ENCODE measurements at regions of chr15 and their contacts with region 1.

Region 1: DNA sequence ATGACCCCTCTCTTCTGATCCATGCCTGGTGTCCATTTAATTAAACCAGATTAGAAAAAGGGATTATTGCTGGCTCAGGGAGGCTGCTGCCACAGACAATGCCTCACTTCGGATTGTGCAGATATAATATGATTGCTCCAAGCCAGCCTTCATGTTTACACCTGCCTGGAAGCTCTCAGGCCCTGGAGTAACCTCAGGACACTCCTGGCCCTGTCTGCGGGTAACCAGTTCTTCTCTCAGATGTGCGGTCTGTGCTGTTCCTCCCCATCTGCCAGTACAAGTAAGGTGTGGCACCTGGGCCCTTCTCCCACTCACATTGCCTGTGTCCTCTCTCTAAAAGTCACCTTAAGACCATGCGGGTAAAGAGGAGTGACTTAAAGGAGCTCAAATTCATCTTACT is 8.8 kb upstream of the GOLGA8J start:
- DNase-seq: no peak
- ATAC-seq: no peak
- H3K4me3 ChIP-seq: no peak overlapping the region
- H3K27ac ChIP-seq: no peak overlapping the region
- H3K4me1 ChIP-seq: 0 out of 3 replicates have a peak, but pooled peaks cover 3% of the 10 kb centered on the region
- CTCF ChIP-seq: no peak
- EP300 ChIP-seq: no peak
- POLR2A ChIP-seq: no peak
- RAD21 ChIP-seq: no peak

Region 2: GRCh38 chr15:29656636-29657475 is 417.1 kb before region 1 on chr15:
- CTCF ChIA-PET with region 1: interaction called, 11 read pairs
- POLR2A ChIA-PET with region 1: no interaction called
- DNase-seq: peak; percentile 52 to 87
- ATAC-seq: peak; percentile 97 to 99
- H3K4me3 ChIP-seq: peak overlapping the region; percentile 50
- H3K27ac ChIP-seq: peak overlapping the region; percentile 67 to 81
- H3K4me1 ChIP-seq: no peaks in the 10 kb centered on the region
- CTCF ChIP-seq: peak; percentile 48
- EP300 ChIP-seq: no peak
- POLR2A ChIP-seq: peak; percentile 17; the same call in 1 of the 2 replicates
- RAD21 ChIP-seq: peak; percentile 13 to 42; a peak in 1 of 5 replicates

Region 3: DNA sequence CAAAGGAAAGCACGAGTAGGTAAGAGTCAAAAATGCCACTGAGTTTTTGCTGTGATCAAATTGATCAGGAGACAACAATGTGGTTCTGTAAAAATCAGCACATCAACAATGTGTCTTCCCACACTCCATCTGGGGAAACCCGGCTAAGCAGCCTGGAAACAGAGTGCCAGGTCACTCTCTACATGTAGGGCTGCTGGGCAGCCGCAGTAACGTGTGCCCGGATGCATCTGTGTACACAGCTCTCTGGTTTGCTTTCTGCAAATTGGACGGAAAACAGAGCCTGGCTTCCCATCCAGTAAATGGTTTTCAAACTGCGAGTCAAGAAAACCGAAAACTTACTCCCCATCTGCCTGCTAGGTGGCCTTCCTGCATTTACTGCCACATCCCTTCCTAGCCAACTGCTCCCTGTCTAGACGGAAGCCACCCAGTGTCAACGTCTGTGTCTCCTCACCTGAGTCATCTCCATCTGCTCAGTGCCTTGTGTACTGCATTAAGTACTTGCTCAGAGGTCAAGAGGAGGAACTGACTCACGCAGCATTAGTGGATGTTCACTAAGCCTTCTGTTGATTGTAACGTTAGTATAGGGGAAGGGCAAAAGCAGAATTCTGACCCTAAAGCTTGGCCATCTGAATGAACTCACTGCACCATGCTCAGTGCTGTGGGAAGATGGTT is 375.7 kb before region 1 on chr15:
- CTCF ChIA-PET with region 1: interaction called, 11 read pairs
- POLR2A ChIA-PET with region 1: no interaction called
- DNase-seq: peak; percentile 86 to 96
- ATAC-seq: peak; percentile 92 to 95
- H3K4me3 ChIP-seq: no peak overlapping the region
- H3K27ac ChIP-seq: peak overlapping the region; percentile 76 to 88
- H3K4me1 ChIP-seq: peaks cover 78% of the 10 kb centered on the region
- CTCF ChIP-seq: no peak
- EP300 ChIP-seq: peak; percentile 68 to 79; a peak in 3 of 5 replicates
- POLR2A ChIP-seq: no peak
- RAD21 ChIP-seq: peak; percentile 17 to 42; a peak in 3 of 5 replicates

Region 4: DNA sequence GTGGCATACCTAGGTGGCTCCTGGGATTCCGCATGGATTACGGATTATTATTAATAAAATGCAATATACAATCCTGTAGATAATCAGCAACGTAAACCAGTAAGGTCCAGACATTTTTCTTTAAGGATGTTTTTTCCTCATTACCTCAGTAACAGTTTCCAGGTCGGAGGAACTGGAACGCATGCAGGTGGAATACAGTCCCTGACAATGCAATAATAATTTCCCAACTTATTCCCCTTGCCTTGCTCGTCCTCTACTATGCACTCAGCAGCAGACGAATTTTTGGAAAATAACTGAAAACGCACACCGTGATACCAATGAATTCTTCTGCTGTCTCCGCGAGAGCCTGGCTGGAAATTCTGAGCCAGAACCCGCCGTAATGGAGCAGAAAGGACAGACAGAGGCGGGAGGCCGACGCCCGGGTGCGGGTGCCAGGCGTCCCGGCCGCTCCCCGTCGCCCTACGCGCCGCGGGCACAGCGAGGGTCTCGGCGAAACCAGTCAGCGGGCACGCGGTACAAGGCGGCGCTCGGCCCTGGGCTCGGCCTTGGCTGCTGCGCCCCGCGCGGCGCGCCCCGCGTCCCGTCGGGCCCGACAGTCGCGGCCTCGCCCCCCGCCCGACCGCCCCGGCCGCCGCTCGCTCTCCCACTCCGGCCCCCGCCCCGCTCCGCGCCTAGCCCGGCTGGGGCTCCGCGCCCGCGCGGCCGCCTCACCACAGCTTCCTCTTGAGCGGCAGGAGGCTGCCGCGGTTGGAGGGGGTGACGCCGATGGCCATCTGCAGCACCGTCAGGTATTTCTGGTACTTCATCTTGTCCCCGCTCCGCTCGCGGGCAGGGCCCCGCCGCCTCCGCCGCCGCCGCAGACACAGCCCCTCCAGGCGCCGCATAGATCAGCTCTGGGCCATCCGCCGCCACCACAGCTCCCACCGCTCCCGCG is 105.7 kb before region 1 on chr15:
- CTCF ChIA-PET with region 1: interaction called, 11 read pairs
- POLR2A ChIA-PET with region 1: no interaction called
- DNase-seq: peak; percentile 35 to 39
- ATAC-seq: peak; percentile 74 to 84
- H3K4me3 ChIP-seq: peak overlapping the region; percentile 70
- H3K27ac ChIP-seq: peak overlapping the region; percentile 70 to 89
- H3K4me1 ChIP-seq: peaks cover 5% of the 10 kb centered on the region; the same call in 1 of the 3 replicates
- CTCF ChIP-seq: no peak
- EP300 ChIP-seq: no peak
- POLR2A ChIP-seq: no peak
- RAD21 ChIP-seq: no peak

Measured in A549 (cell line).